Activated CD4-positive, alpha-beta T cell treated with anti-CD3 and anti-CD28 coated beads, Interleukin-2, amount 10 ng/mL, durations not matched to agents 24 days and 14 days (primary cell): ENCODE measurements at regions of chr12 and their contacts with region 1.

Region 1: DNA sequence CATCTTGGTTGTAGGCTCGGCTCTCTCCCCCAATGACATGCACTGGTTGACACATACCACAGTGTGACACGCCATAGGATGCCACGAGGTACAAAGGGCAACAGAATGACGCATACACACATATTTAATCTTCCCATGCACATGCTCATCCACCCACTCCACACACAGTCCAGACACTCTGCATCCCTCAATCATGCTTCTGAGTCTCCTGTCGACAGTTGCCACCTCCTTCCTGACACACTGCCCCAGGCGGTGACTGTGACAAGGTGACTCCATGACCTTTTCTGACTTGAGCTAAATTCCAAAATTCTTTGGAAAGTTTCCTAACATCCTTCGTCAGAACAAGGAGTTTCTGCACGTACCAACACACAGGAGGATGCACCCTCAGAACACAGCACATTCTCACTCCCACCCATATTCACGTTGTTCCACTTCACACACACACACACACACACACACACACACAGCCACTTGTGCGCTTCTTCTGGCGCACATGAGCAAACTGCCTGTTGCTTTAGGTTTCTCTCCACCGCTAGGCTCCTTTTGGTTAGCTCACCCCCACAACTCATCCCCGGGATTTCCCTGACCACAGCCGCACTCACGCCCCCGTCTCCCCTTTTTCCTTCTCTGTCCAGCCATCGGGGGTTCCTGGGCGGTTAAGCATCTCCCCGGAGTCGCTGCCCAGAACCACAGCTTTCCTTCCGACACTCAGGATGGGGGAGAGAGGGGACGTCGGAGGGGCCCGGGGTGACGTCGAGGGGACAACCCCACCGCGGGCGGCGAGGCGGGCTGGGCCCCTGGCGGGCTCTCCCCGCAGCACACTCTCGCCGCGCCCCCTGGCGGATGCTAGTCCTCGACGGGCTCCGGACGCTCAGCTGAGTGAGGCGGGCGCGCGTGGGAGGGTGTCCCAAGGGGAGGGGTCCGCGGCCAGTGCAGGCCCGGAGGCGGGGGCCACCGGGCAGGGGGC is 524 bp upstream of the WNT1 start:
- DNase-seq: peak; percentile 94
- H3K4me3 Mint-ChIP-seq: peak overlapping the region; percentile 64
- H3K27ac Mint-ChIP-seq: peak overlapping the region; percentile 72
- H3K4me1 Mint-ChIP-seq: peaks cover 55% of the 10 kb centered on the region
- H3K27me3 Mint-ChIP-seq: peaks cover 88% of the 10 kb centered on the region

Region 2: GRCh38 chr12:48001505-48002413 is 975.8 kb before region 1 on chr12:
- intact Hi-C with region 1: loop called (anchors 5 kb)
- DNase-seq: peak; percentile 72
- H3K4me3 Mint-ChIP-seq: peak overlapping the region; percentile 73
- H3K27ac Mint-ChIP-seq: peak overlapping the region; percentile 42
- H3K4me1 Mint-ChIP-seq: peaks cover 33% of the 10 kb centered on the region
- H3K27me3 Mint-ChIP-seq: peaks cover 90% of the 10 kb centered on the region

Region 3: GRCh38 chr12:48556631-48557030 is 421.0 kb before region 1 on chr12:
- intact Hi-C with region 1: no loop called
- DNase-seq: no peak
- H3K4me3 Mint-ChIP-seq: no peak overlapping the region
- H3K27ac Mint-ChIP-seq: no peak overlapping the region
- H3K4me1 Mint-ChIP-seq: no peaks in the 10 kb centered on the region
- H3K27me3 Mint-ChIP-seq: no peaks in the 10 kb centered on the region

Region 4: GRCh38 chr12:48890657-48891418 is 86.8 kb before region 1 on chr12:
- intact Hi-C with region 1: no loop called
- DNase-seq: peak; percentile 94
- H3K4me3 Mint-ChIP-seq: peak overlapping the region; percentile 62
- H3K27ac Mint-ChIP-seq: no peak overlapping the region
- H3K4me1 Mint-ChIP-seq: peaks cover 7% of the 10 kb centered on the region
- H3K27me3 Mint-ChIP-seq: peaks cover 26% of the 10 kb centered on the region

Region 5: DNA sequence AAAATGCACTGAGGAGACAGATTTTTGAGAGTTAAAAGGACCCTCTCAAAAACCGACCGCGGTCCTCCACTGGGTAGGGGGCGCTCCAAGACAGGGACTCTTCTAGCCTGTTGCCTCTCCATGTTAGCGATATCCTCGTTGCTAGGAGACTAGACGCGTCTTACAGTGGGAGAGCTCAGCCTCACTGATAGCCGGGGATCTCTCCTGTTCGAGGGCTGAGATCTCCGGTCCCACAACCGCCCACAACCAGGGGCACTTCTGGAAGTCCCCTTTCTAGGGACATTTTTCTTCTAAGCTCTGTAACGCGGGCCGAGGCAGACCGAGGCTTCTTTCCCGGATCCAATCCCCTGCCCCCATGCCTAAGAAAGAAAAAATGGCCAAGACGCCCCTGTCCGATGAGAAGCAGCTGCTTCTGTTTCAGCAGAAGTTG is 73.6 kb before region 1 on chr12:
- intact Hi-C with region 1: loop called (anchors 5 kb)
- DNase-seq: peak; percentile 94
- H3K4me3 Mint-ChIP-seq: peak overlapping the region; percentile 74
- H3K27ac Mint-ChIP-seq: peak overlapping the region; percentile 29
- H3K4me1 Mint-ChIP-seq: peaks cover 12% of the 10 kb centered on the region
- H3K27me3 Mint-ChIP-seq: peaks cover 6% of the 10 kb centered on the region

Region 6: GRCh38 chr12:48988030-48988649 is 10.5 kb after region 1 on chr12:
- intact Hi-C with region 1: loop called (anchors 1 kb)
- DNase-seq: peak; percentile 93
- H3K4me3 Mint-ChIP-seq: no peak overlapping the region
- H3K27ac Mint-ChIP-seq: no peak overlapping the region
- H3K4me1 Mint-ChIP-seq: peaks cover 7% of the 10 kb centered on the region
- H3K27me3 Mint-ChIP-seq: peaks cover 66% of the 10 kb centered on the region

Region 7: DNA sequence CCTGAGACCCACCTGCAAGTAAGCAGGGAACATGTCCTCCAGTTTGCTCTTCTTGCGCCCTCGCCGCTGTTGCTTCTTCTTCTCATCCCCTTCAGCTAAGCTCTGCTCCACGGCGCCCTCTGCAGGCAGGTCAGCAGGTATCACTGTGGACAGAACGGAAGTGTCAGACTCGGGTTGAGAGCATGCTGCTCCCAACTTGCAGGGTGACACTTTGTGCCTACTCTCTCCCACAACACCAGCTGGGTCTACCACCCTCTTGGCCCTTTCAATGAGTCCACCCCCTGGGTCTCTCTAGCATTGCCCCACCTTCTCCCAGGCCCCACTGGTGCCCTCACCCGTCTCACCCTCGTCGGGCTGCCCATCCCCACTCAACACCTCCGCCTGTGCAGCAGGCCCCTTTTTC is 66.3 kb after region 1 on chr12:
- intact Hi-C with region 1: no loop called
- DNase-seq: peak; percentile 89
- H3K4me3 Mint-ChIP-seq: no peak overlapping the region
- H3K27ac Mint-ChIP-seq: no peak overlapping the region
- H3K4me1 Mint-ChIP-seq: no peaks in the 10 kb centered on the region
- H3K27me3 Mint-ChIP-seq: no peaks in the 10 kb centered on the region

Region 8: DNA sequence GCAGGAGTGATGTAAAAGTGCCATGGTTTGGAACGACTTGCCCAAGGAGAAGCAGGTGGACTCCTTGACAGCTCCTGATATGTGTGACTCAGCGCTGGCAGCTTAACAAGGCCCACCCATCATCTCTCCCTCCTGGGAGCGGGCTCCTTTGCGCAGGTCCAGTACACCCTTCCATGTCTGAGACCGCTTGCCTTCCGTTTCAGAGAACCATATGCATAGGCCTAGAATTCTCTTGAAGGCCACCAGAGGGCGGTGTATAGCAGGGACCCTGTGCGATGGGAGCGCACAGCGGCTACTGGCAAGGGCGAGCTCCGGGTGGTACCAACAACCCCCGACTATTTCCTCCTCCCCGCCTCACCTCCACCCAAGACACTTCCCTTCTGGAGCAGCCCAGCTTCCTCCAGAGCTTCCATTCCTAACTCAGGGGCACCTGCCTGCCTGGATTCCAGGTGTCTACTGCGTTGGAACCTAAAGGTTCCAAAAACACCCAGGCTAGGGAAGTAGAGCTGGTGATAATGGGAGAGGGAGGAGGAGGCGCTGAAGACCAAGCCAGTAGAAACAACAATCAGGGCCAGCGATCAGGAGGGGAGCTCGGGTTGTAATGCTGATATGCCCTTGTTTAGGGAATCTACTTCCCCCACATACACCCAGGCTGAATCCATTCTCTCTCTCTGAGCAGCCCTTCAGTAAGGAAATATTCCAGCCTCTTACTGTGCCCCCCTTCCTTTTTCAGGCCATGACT is 110.8 kb after region 1 on chr12:
- intact Hi-C with region 1: loop called (anchors 1 kb)
- DNase-seq: peak; percentile 92
- H3K4me3 Mint-ChIP-seq: peak overlapping the region; percentile 39
- H3K27ac Mint-ChIP-seq: no peak overlapping the region
- H3K4me1 Mint-ChIP-seq: peaks cover 40% of the 10 kb centered on the region
- H3K27me3 Mint-ChIP-seq: peaks cover 42% of the 10 kb centered on the region

Region 9: GRCh38 chr12:49130151-49131050 is 152.8 kb after region 1 on chr12:
- intact Hi-C with region 1: no loop called
- DNase-seq: peak; percentile 98
- H3K4me3 Mint-ChIP-seq: peak overlapping the region; percentile 98
- H3K27ac Mint-ChIP-seq: peak overlapping the region; percentile 99
- H3K4me1 Mint-ChIP-seq: peaks cover 36% of the 10 kb centered on the region
- H3K27me3 Mint-ChIP-seq: peaks cover 2% of the 10 kb centered on the region